Caco-2 (cell line): ENCODE measurements at regions of chr7 and their contacts with region 1.

Region 1: DNA sequence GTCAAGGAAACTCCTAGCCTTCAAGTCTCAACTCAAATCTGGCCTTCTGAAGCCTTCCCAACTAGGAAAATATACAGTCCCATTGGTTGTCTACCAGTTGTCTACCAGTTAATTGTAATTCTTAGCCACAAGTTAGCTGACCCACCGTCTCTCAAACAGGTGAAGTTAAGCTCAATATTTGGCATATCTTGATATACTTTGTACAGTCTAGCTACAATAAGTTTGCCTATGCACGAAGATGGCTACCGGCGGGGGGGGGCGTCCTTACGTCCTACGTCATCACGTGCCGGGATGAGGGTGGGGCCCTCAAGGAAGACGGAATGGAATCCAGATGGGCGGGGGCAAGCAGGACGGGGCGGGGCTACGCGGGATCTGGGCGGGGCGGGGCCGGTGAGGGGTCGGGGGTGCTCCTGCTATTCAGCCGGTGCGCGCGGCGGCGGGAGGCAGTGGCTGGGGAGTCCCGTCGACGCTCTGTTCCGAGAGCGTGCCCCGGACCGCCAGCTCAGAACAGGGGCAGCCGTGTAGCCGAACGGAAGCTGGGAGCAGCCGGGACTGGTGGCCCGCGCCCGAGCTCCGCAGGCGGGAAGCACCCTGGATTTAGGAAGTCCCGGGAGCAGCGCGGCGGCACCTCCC is at the start of gene AHR:
- DNase-seq: peak; percentile 93 to 96
- H3K4me3 ChIP-seq: peak within 1 kb of the TSS; percentile 97
- H3K4me3 Mint-ChIP-seq: peak within 1 kb of the TSS; percentile 87
- H3K27ac Mint-ChIP-seq: peak within 1 kb of the TSS; percentile 91
- H3K4me1 ChIP-seq: peaks cover 13% of the 10 kb centered on the region; the same call in 1 of the 2 replicates
- H3K4me1 Mint-ChIP-seq: peaks cover 7% of the 10 kb centered on the region
- H3K27me3 ChIP-seq: no peaks in the 10 kb centered on the region
- H3K27me3 Mint-ChIP-seq: no peaks in the 10 kb centered on the region
- CTCF ChIP-seq: no peak
- total RNA-seq, gene AHR: 39.0 and 39.4 TPM in 2 replicates

Region 2: DNA sequence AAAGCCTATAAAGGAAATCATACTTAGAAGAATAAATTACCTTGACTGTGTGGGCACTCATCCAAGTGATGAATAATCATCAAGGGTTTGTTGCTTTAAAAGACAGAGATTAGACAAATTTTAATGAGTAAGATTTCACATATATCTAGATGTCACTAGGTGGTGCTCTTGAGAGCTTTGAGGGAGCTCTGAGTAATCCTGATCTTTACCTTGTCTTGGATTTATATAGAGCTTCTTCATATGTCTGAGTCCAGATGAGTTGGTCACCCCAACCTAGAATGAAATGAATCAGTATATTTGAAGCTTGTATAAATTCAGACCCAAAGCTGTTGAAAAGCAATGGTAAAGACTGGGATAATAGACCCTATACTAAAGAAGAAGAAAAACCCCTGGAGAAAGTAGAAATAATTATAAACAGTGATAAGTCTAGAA is 497.2 kb before region 1 on chr7:
- CTCF ChIA-PET with region 1: no interaction called
- POLR2A ChIA-PET with region 1: interaction called, 5 read pairs
- intact Hi-C with region 1: loop called (anchors 5 kb)
- DNase-seq: peak in 1 of 2 experiments; percentile 44
- H3K4me3 ChIP-seq: no peak overlapping the region
- H3K4me3 Mint-ChIP-seq: peak overlapping the region; percentile 20
- H3K27ac Mint-ChIP-seq: peak overlapping the region; percentile 13
- H3K4me1 ChIP-seq: peaks cover 29% of the 10 kb centered on the region
- H3K4me1 Mint-ChIP-seq: peaks cover 16% of the 10 kb centered on the region
- H3K27me3 ChIP-seq: no peaks in the 10 kb centered on the region
- H3K27me3 Mint-ChIP-seq: no peaks in the 10 kb centered on the region
- CTCF ChIP-seq: peak in 1 of 2 experiments; percentile 54

Region 3: DNA sequence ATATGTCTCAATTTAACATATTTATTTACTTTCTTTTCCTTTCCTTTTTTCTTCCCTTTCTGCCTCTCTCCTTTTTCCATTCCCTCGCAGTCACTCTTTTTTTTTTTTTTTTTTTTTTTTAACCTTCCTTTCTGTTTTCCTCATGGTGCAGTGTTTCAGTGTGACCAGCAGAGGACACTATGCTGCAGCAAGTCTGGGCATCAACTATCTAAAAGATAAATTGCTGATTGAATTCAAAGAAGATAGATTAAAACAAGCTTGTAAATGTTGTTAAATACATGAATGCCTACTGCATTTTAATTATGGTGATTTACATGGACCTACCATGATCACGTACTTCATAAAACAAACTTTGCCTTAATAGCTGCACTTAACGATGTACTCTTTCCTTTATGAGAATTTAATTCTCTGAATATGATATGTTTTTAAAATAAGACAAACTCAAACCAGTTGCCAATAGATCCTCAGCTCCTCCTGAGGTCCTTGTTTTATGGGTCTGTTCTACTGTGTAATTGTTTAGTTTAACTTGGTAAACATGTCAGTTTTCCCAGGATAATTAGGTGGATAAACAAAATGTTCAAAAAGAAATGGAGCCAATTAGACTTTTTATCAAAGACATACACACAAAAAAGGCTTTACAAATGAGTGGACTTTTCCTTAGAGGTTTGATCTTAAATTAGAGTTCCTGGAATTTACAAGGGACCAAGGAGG is 315.5 kb before region 1 on chr7:
- CTCF ChIA-PET with region 1: interaction called, 10 read pairs
- POLR2A ChIA-PET with region 1: no interaction called
- intact Hi-C with region 1: loop called (anchors 1 kb)
- DNase-seq: peak in 1 of 2 experiments; percentile 38
- H3K4me3 ChIP-seq: no peak overlapping the region
- H3K4me3 Mint-ChIP-seq: no peak overlapping the region
- H3K27ac Mint-ChIP-seq: peak overlapping the region; percentile 65
- H3K4me1 ChIP-seq: no peaks in the 10 kb centered on the region
- H3K4me1 Mint-ChIP-seq: peaks cover 17% of the 10 kb centered on the region
- H3K27me3 ChIP-seq: no peaks in the 10 kb centered on the region
- H3K27me3 Mint-ChIP-seq: no peaks in the 10 kb centered on the region
- CTCF ChIP-seq: peak; percentile 90 to 96

Region 4: GRCh38 chr7:17130281-17131059 is 167.9 kb before region 1 on chr7:
- CTCF ChIA-PET with region 1: no interaction called
- POLR2A ChIA-PET with region 1: interaction called, 12 read pairs
- intact Hi-C with region 1: loop called (anchors 1 kb)
- DNase-seq: peak; percentile 81 to 83
- H3K4me3 ChIP-seq: no peak overlapping the region
- H3K4me3 Mint-ChIP-seq: peak overlapping the region; percentile 54
- H3K27ac Mint-ChIP-seq: peak overlapping the region; percentile 80
- H3K4me1 ChIP-seq: peaks cover 35% of the 10 kb centered on the region
- H3K4me1 Mint-ChIP-seq: peaks cover 38% of the 10 kb centered on the region
- H3K27me3 ChIP-seq: no peaks in the 10 kb centered on the region
- H3K27me3 Mint-ChIP-seq: no peaks in the 10 kb centered on the region
- CTCF ChIP-seq: no peak

Region 5: DNA sequence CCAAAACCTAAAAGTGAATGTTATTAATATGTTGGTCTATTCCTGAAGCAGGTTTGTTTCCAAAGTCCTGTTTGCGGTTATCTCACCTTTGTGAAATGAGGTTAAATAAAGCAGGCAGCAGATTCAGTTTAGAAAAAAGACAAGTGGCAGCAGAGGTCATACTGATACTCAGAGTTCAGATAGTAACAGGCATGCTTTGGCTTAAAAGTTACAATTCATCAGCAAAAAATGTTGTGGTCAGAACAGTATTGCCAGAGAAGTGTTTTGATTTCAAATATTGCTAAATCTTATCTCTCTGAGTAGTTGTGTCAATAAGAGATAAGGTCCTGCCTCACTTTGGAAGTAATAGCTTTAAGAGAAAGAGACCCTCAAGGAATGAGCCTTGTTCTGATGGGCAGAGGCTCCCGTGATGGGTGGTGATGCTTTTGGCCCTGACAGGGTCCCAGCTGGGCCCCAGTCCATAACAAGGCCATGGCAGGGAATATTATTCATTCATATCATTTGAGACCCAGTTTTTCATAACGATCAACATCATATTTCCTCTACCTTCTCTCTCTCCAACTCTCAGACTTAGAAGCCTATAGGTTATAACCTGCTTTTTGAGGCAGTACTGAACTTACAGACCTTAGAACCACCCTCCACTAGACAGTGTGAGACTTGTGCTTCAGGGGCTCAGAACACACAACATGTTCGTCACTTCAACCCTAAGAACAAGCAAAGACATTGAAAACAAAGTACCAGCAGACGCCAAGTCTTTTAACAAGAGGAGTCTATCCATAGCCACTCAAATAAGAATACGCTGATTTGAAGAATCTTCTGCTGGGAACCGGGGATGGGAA is 58.4 kb before region 1 on chr7:
- CTCF ChIA-PET with region 1: no interaction called
- POLR2A ChIA-PET with region 1: no interaction called
- intact Hi-C with region 1: loop called (anchors 1 kb)
- DNase-seq: peak; percentile 39 to 72
- H3K4me3 ChIP-seq: no peak overlapping the region
- H3K4me3 Mint-ChIP-seq: no peak overlapping the region
- H3K27ac Mint-ChIP-seq: peak overlapping the region; percentile 14
- H3K4me1 ChIP-seq: peaks cover 45% of the 10 kb centered on the region
- H3K4me1 Mint-ChIP-seq: peaks cover 38% of the 10 kb centered on the region
- H3K27me3 ChIP-seq: no peaks in the 10 kb centered on the region
- H3K27me3 Mint-ChIP-seq: no peaks in the 10 kb centered on the region
- CTCF ChIP-seq: no peak

Region 6: GRCh38 chr7:17275749-17276671 is 22.3 kb before region 1 on chr7:
- CTCF ChIA-PET with region 1: no interaction called
- POLR2A ChIA-PET with region 1: no interaction called
- intact Hi-C with region 1: no loop called
- DNase-seq: no peak
- H3K4me3 ChIP-seq: no peak overlapping the region
- H3K4me3 Mint-ChIP-seq: no peak overlapping the region
- H3K27ac Mint-ChIP-seq: no peak overlapping the region
- H3K4me1 ChIP-seq: no peaks in the 10 kb centered on the region
- H3K4me1 Mint-ChIP-seq: no peaks in the 10 kb centered on the region
- H3K27me3 ChIP-seq: no peaks in the 10 kb centered on the region
- H3K27me3 Mint-ChIP-seq: no peaks in the 10 kb centered on the region
- CTCF ChIP-seq: no peak

Region 7: GRCh38 chr7:17646253-17646956 is 348.1 kb after region 1 on chr7:
- CTCF ChIA-PET with region 1: no interaction called
- POLR2A ChIA-PET with region 1: no interaction called
- intact Hi-C with region 1: loop called (anchors 2 kb)
- DNase-seq: no peak
- H3K4me3 ChIP-seq: no peak overlapping the region
- H3K4me3 Mint-ChIP-seq: no peak overlapping the region
- H3K27ac Mint-ChIP-seq: no peak overlapping the region
- H3K4me1 ChIP-seq: no peaks in the 10 kb centered on the region
- H3K4me1 Mint-ChIP-seq: no peaks in the 10 kb centered on the region
- H3K27me3 ChIP-seq: no peaks in the 10 kb centered on the region
- H3K27me3 Mint-ChIP-seq: no peaks in the 10 kb centered on the region
- CTCF ChIP-seq: peak in 1 of 2 experiments; percentile 42